Ascending aorta (tissue), 2 donors: ENCODE measurements at regions of chr2 and their contacts with region 1.

Region 1: DNA sequence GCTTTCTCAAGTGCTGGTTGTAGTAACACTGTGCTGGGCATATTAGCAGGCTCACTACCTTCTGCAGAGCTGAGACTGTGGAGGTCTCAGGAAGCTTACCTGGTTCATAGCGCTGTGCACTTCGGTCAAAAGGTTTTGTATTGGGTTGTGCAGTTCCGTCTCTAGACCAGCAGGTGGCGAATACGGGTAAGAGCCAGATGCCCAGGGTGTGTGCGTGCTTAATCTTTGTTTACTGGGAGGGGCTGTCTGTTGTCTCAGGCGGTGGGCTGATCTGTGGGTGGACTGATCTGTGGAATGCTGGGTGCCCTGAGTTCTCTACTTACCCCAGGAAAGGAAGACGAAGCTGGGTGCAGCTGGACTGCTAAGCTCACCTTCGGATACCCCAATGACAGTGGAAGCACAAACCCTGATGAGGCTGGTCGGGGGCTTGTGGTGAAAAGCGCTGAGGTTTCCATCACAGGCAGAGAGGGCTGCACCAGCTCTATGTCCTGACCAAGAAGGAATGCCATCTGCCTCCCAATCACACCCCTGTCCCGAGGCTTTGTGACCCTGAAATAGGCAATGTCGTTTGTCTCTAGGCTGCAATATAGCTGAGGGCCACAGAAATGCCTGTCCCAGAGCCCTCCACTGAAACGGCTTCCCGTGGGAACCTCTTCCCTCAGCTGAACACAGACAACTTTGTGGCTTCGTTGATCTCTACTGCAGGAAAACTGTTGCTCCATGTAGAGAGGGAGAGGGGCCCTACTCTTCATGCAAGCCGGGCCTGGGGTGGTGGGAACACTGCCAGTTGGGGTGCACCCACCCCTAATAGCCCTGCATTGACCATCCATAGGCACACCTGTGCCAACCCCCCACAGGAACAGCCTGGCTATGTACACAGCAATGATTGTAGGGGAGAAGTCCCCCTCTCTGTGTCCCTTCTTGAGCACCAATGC is 45.9 kb upstream of the FAM117B start:
- DNase-seq: peak; percentile 18 to 82
- H3K4me3 ChIP-seq: peak overlapping the region; percentile 35 to 36
- H3K27ac ChIP-seq: no peak overlapping the region
- H3K4me1 ChIP-seq: peaks cover 0 to 7% of the 10 kb centered on the region in 2 donors
- H3K27me3 ChIP-seq: no peaks in the 10 kb centered on the region
- CTCF ChIP-seq: peak; percentile 79 to 94 (median 90)

Region 2: GRCh38 chr2:202643012-202643858 is 54.3 kb after region 1 on chr2:
- intact Hi-C with region 1: no loop called
- DNase-seq: no peak
- H3K4me3 ChIP-seq: no peak overlapping the region
- H3K27ac ChIP-seq: no peak overlapping the region
- H3K4me1 ChIP-seq: no peaks in the 10 kb centered on the region
- H3K27me3 ChIP-seq: no peaks in the 10 kb centered on the region
- CTCF ChIP-seq: no peak

Region 3: DNA sequence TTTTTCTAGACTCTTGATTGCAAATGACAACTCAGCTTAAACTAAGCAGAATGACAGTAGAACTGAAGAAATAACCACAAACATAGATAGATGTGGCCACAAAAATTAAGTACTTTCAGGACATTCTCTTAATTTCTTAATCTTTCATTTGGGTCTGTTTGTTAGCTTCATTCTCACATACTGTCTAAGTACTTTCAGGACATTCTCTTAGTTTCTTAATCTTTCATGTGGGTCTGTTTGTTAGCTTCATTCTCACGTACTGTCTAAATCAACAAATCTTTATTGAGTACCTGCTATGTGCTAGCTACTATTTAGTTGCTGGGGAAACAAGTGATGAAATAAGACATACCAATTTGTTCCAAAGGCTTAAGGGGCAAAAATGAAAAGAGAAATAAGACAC is 80.9 kb after region 1 on chr2:
- intact Hi-C with region 1: loop called (anchors 10 kb)
- DNase-seq: no peak
- H3K4me3 ChIP-seq: no peak overlapping the region
- H3K27ac ChIP-seq: no peak overlapping the region
- H3K4me1 ChIP-seq: no peaks in the 10 kb centered on the region
- H3K27me3 ChIP-seq: no peaks in the 10 kb centered on the region
- CTCF ChIP-seq: no peak